ENCODE measurements at regions of chr1 and their contacts with region 1.

Region 1: DNA sequence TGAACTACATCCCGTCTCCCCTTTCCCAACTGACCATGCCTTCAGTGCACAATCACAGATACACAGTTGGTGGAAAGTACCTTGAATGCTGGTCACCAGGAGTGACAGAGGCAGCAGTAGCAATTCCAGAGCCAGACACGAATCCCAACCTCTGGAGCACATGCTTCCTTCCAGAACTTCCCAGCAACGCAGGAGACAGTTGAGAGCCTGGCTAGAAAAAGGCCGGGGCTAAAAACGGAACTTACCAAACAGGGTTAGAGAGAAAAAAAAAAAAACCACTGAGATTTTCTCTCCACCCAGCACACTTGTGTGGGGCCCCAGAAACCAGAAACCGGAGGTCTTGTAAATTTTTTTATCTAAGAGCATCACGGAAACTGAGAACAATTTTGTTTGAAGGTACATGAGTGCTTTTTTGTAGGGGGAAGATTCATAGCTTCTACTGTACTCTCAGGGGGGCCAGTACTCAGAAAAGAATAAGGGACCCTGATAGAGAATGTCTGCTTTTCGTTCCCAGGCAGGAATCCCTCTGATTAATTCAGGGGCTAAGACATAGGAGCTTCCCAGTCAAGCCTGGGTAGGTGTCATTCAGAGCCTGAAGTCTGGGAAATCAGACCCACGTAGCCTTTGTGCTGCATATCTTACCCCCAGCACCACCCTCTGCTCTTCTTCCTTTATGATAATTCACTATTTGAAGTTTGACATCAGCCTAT is at the start of gene CD48:
- DNase-seq: no peak
- ATAC-seq: peak; percentile 58
- H3K4me3 Mint-ChIP-seq: no peak within 1 kb of the TSS
- H3K27ac Mint-ChIP-seq: no peak within 1 kb of the TSS
- H3K4me1 Mint-ChIP-seq: peaks cover 32% of the 10 kb centered on the region
- H3K27me3 Mint-ChIP-seq: no peaks in the 10 kb centered on the region
- CTCF ChIP-seq: no peak
- total RNA-seq, gene CD48: 200 and 202 TPM in 2 replicates

Region 2: DNA sequence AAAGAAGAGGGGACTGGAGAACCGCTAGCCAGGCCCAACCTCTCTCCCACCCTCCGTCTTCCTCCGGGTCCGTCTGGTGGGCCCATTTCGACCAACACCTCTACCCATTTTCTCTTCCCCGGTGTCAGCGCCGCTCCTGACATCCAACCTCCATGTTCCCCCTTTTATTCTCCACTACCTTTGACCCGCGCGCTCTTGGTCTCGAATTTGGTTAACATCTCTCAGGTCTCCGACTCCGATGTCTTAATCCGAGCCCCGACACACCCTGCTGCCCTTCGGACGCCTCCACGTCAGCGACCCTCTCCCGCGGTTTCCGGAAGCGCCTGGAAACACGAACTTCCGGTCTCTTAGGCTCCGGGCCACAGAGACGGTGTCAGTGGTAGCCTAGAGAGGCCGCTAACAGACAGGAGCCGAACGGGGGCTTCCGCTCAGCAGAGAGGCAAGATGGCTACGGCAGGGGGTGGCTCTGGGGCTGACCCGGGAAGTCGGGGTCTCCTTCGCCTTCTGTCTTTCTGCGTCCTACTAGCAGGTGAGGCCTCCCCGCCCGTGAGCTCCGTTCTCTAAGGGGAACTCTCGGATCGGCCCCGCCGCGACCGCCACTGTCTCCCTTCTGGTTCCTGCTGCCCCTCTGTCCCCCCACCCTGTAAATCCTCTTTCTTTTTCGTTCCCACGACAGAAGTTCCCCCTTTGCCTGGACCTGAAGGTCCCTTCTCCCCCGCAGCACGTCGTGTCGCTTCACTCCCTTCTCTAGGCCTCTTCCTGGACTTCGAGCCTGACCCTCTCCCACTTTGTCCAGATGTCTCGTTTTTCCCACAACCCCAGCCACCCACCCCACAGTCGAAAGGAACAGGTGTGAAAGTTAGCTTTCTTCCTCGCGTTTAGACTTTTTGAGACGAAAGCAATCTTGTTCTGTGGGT is 368.5 kb before region 1 on chr1 and contains the starts of genes COPA and NCSTN:
- CTCF ChIA-PET with region 1: no interaction called
- POLR2A ChIA-PET with region 1: interaction called, 3 read pairs
- intact Hi-C with region 1: loop called (anchors 2 kb)
- DNase-seq: peak; percentile 83
- ATAC-seq: peak; percentile 88
- H3K4me3 Mint-ChIP-seq: peak within 1 kb of the TSS; percentile 99
- H3K27ac Mint-ChIP-seq: peak within 1 kb of the TSS; percentile 98
- H3K4me1 Mint-ChIP-seq: peaks cover 68% of the 10 kb centered on the region
- H3K27me3 Mint-ChIP-seq: no peaks in the 10 kb centered on the region
- CTCF ChIP-seq: no peak
- total RNA-seq, gene COPA: 161 and 174 TPM in 2 replicates
- total RNA-seq, gene NCSTN: 108 and 118 TPM in 2 replicates

Region 3: GRCh38 chr1:160675641-160676410 is 35.9 kb before region 1 on chr1:
- CTCF ChIA-PET with region 1: interaction called, 46 read pairs
- POLR2A ChIA-PET with region 1: interaction called, 6 read pairs
- intact Hi-C with region 1: loop called (anchors 5 kb)
- DNase-seq: peak; percentile 60
- ATAC-seq: peak; percentile 81
- H3K4me3 Mint-ChIP-seq: peak overlapping the region; percentile 44
- H3K27ac Mint-ChIP-seq: peak overlapping the region; percentile 61
- H3K4me1 Mint-ChIP-seq: peaks cover 14% of the 10 kb centered on the region
- H3K27me3 Mint-ChIP-seq: no peaks in the 10 kb centered on the region
- CTCF ChIP-seq: peak; percentile 57

Region 4: GRCh38 chr1:160726498-160727315 is 14.9 kb after region 1 on chr1:
- CTCF ChIA-PET with region 1: interaction called, 5 read pairs
- POLR2A ChIA-PET with region 1: interaction called, 6 read pairs
- intact Hi-C with region 1: loop called (anchors 1 kb)
- DNase-seq: peak; percentile 32
- ATAC-seq: peak; percentile 88
- H3K4me3 Mint-ChIP-seq: no peak overlapping the region
- H3K27ac Mint-ChIP-seq: no peak overlapping the region
- H3K4me1 Mint-ChIP-seq: peaks cover 10% of the 10 kb centered on the region
- H3K27me3 Mint-ChIP-seq: no peaks in the 10 kb centered on the region
- CTCF ChIP-seq: peak; percentile 83

Region 5: DNA sequence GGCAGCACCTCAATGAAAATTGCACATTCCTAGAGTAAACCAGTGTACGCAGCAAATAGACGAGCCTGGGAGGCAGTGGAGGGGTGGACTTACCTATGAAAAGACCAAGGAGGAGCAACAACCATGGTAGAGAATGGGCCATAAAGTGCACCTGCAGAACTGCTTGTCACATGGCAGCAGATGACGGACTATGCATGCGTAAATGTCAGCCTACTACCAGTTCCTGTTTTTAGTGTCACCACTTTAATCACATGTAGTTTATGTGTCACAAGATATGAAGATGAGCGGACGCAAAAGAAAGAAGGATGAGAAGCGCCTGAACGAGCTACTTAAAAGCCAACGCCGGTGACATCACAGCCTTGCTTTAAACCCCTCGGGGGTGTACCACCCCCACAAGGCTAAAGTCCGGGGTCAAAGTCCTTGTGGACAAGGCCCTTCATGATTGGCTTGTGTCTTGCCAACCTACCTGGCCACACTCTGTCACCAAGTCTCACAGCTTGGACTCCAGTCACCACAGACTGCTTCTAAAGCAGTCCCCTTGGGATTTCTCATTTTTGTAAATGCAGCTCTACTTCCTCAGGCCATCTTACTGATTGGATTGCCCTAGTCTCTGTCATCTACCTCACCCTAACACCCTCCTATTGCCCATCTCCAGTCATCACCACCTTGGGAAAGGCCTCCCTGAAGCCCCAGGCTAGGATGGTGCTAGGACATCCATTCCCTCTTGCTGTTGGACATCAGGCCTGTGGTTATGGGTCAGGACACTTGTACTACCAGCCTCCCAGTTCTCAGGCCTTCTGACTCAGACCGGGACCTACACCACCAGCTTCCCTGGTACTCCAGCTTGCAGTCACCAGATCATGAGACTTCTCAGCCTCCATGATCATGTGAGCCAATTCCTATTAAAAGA is 78.2 kb after region 1 on chr1:
- CTCF ChIA-PET with region 1: no interaction called
- POLR2A ChIA-PET with region 1: interaction called, 15 read pairs
- intact Hi-C with region 1: no loop called
- DNase-seq: peak; percentile 74
- ATAC-seq: peak; percentile 84
- H3K4me3 Mint-ChIP-seq: peak overlapping the region; percentile 59
- H3K27ac Mint-ChIP-seq: peak overlapping the region; percentile 98
- H3K4me1 Mint-ChIP-seq: peaks cover 44% of the 10 kb centered on the region
- H3K27me3 Mint-ChIP-seq: no peaks in the 10 kb centered on the region
- CTCF ChIP-seq: no peak

Region 6: GRCh38 chr1:161399257-161399998 is 687.7 kb after region 1 on chr1:
- CTCF ChIA-PET with region 1: no interaction called
- POLR2A ChIA-PET with region 1: no interaction called
- intact Hi-C with region 1: loop called (anchors 10 kb)
- DNase-seq: peak; percentile 93
- ATAC-seq: peak; percentile 81
- H3K4me3 Mint-ChIP-seq: peak overlapping the region; percentile 95
- H3K27ac Mint-ChIP-seq: peak overlapping the region; percentile 99
- H3K4me1 Mint-ChIP-seq: peaks cover 30% of the 10 kb centered on the region
- H3K27me3 Mint-ChIP-seq: no peaks in the 10 kb centered on the region
- CTCF ChIP-seq: no peak